ENCODE measurements at regions of chr17 and their contacts with region 1.

Region 1: GRCh38 chr17:30336369-30337171 is 2.7 kb upstream of the TMIGD1 start:
- DNase-seq: peak; percentile 78
- ATAC-seq: peak; percentile 56
- H3K4me3 Mint-ChIP-seq: no peak overlapping the region
- H3K27ac Mint-ChIP-seq: no peak overlapping the region
- H3K4me1 Mint-ChIP-seq: peaks cover 36% of the 10 kb centered on the region
- H3K27me3 Mint-ChIP-seq: peaks cover 2% of the 10 kb centered on the region

Region 2: GRCh38 chr17:30104575-30105339 is 231.8 kb before region 1 on chr17:
- CTCF ChIA-PET with region 1: interaction called, 108 read pairs
- POLR2A ChIA-PET with region 1: interaction called, 3 read pairs
- DNase-seq: peak; percentile 82
- ATAC-seq: peak; percentile 98
- H3K4me3 Mint-ChIP-seq: peak overlapping the region; percentile 72
- H3K27ac Mint-ChIP-seq: no peak overlapping the region
- H3K4me1 Mint-ChIP-seq: peaks cover 6% of the 10 kb centered on the region
- H3K27me3 Mint-ChIP-seq: peaks cover 24% of the 10 kb centered on the region

Region 3: DNA sequence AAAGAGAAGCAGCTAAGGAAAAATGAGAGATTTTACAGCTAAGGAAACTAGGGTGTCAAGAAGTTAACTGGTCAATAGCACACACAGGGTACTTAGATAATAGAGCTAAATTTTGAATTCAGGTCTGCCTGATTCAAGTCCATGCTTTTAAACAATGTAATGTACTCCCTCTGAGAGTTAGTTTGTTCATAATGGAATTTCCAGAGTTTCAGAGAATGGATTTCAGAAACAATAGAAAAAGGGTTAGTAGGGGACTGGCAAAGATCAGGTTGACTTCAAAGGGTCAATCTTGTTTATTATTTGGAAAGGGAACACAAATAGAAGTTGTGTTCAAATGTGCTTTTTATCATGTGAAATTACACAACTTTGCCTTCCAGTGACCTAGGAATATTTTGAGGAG is 202.0 kb before region 1 on chr17:
- CTCF ChIA-PET with region 1: interaction called, 10 read pairs
- POLR2A ChIA-PET with region 1: no interaction called
- DNase-seq: no peak
- ATAC-seq: no peak
- H3K4me3 Mint-ChIP-seq: no peak overlapping the region
- H3K27ac Mint-ChIP-seq: no peak overlapping the region
- H3K4me1 Mint-ChIP-seq: peaks cover 10% of the 10 kb centered on the region
- H3K27me3 Mint-ChIP-seq: no peaks in the 10 kb centered on the region

Region 4: DNA sequence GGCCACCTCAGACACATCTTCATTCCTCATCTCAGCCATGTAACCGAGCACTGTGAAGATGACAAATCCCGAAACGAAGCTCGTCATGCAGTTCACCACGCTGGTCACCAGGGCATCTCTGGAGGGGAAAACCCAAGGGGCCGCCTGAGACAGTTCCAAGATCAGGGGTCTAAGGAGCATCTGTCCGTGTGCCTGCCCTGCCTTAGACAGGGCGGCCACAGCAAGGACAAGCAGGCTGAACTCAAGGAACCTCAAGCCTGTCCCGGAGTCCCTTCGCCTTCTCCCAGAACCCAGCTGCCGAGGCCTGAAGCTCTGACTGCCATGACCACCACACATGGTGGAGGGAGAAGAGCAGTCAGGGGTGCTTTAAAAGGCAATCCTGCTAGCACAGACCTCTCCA is 123.8 kb before region 1 on chr17:
- CTCF ChIA-PET with region 1: no interaction called
- POLR2A ChIA-PET with region 1: no interaction called
- DNase-seq: no peak
- ATAC-seq: no peak
- H3K4me3 Mint-ChIP-seq: no peak overlapping the region
- H3K27ac Mint-ChIP-seq: no peak overlapping the region
- H3K4me1 Mint-ChIP-seq: peaks cover 4% of the 10 kb centered on the region
- H3K27me3 Mint-ChIP-seq: peaks cover 3% of the 10 kb centered on the region

Region 5: DNA sequence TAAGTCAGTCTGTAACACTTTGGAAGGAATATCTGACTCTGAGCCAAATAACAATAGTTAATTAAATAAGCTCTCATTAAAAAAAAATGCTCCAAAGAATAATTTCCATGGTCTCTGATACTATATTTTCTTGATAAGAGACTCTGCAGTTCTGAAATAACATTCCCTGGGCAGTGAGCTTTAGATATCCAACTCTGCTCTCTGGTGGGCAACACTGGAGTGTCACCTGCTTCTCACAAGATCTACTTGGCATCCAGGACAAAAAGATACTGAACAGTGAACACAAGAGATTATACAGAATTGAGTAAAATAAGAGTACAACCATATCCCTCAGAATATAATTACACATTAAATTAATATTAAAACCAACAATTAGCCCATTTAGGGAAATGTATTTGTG is 58.5 kb before region 1 on chr17:
- CTCF ChIA-PET with region 1: interaction called, 14 read pairs
- POLR2A ChIA-PET with region 1: no interaction called
- DNase-seq: no peak
- ATAC-seq: no peak
- H3K4me3 Mint-ChIP-seq: no peak overlapping the region
- H3K27ac Mint-ChIP-seq: no peak overlapping the region
- H3K4me1 Mint-ChIP-seq: peaks cover 4% of the 10 kb centered on the region
- H3K27me3 Mint-ChIP-seq: no peaks in the 10 kb centered on the region

Region 6: DNA sequence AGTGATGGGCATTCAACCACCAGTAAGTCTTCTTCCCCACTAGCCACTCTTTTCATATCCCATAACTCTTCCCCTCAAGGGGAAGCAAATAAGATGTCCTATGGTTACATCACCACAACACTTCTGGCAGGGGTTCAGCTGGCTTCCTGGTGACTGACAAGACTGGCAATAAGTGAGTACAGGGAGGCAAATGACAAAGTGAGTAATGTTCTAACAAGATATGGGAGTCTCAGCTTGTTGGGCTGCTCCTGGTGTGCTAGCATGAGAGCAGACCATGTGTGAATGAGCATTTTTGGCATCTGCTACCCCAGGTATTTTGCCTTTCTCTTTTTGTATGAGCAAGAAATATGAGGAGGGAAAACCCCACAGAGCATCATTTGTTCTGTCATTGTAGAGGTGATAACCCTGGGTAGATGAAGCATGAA is 12.7 kb before region 1 on chr17:
- CTCF ChIA-PET with region 1: interaction called, 48 read pairs
- POLR2A ChIA-PET with region 1: interaction called, 4 read pairs
- DNase-seq: peak; percentile 41
- ATAC-seq: peak; percentile 67
- H3K4me3 Mint-ChIP-seq: peak overlapping the region; percentile 34
- H3K27ac Mint-ChIP-seq: peak overlapping the region; percentile 35
- H3K4me1 Mint-ChIP-seq: peaks cover 26% of the 10 kb centered on the region
- H3K27me3 Mint-ChIP-seq: peaks cover 4% of the 10 kb centered on the region

Region 7: GRCh38 chr17:30477083-30477773 is 140.7 kb after region 1 on chr17 and contains the start of gene GOSR1:
- CTCF ChIA-PET with region 1: interaction called, 11 read pairs
- POLR2A ChIA-PET with region 1: interaction called, 3 read pairs
- DNase-seq: peak; percentile 96
- ATAC-seq: peak; percentile 99
- H3K4me3 Mint-ChIP-seq: peak within 1 kb of the TSS; percentile 95
- H3K27ac Mint-ChIP-seq: peak within 1 kb of the TSS; percentile 97
- H3K4me1 Mint-ChIP-seq: peaks cover 30% of the 10 kb centered on the region
- H3K27me3 Mint-ChIP-seq: peaks cover 6% of the 10 kb centered on the region
- total RNA-seq, gene GOSR1: 41.5 to 44.0 TPM